Left ventricle myocardium inferior (tissue), 1 donor: ENCODE measurements at regions of chr12 and their contacts with region 1.

Region 1: GRCh38 chr12:19779393-19780056 is 340.2 kb downstream of the AEBP2 start:
- DNase-seq: peak; percentile 36
- H3K4me3 ChIP-seq: peak overlapping the region; percentile 22
- H3K27ac ChIP-seq: peak overlapping the region; percentile 65
- H3K4me1 ChIP-seq: peaks cover 26% of the 10 kb centered on the region
- H3K27me3 ChIP-seq: no peaks in the 10 kb centered on the region
- CTCF ChIP-seq: peak; percentile 25

Region 2: GRCh38 chr12:18217966-18218365 is 1561.6 kb before region 1 on chr12:
- intact Hi-C with region 1: no loop called
- DNase-seq: no peak
- H3K4me3 ChIP-seq: no peak overlapping the region
- H3K27ac ChIP-seq: no peak overlapping the region
- H3K4me1 ChIP-seq: no peaks in the 10 kb centered on the region
- H3K27me3 ChIP-seq: no peaks in the 10 kb centered on the region
- CTCF ChIP-seq: no peak

Region 3: GRCh38 chr12:19428268-19428667 is 351.3 kb before region 1 on chr12:
- intact Hi-C with region 1: no loop called
- DNase-seq: no peak
- H3K4me3 ChIP-seq: no peak overlapping the region
- H3K27ac ChIP-seq: no peak overlapping the region
- H3K4me1 ChIP-seq: peaks cover 6% of the 10 kb centered on the region
- H3K27me3 ChIP-seq: no peaks in the 10 kb centered on the region
- CTCF ChIP-seq: no peak

Region 4: DNA sequence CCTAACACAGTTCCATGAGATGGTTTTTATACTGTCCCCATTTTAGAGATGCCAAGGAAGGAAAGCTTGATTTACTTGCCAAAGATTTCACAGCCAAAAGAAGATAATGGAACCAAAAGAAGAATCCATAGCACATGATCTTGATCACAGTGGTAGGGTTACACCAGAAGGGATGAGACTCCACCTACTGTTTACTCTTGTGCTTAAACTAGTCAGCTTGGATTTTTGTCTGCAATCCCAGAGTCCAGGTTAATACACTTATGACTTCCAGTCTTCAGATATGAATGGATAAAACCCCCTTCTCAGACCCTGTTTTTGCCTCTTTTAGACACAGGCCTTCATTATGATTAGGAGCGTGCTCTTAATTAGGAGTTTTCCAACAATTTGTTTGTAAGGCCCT is 114.0 kb after region 1 on chr12:
- intact Hi-C with region 1: loop called (anchors 10 kb)
- DNase-seq: no peak
- H3K4me3 ChIP-seq: no peak overlapping the region
- H3K27ac ChIP-seq: no peak overlapping the region
- H3K4me1 ChIP-seq: peaks cover 35% of the 10 kb centered on the region
- H3K27me3 ChIP-seq: no peaks in the 10 kb centered on the region
- CTCF ChIP-seq: peak; percentile 41